ENCODE measurements at regions of chr11 and their contacts with region 1.

Region 1: GRCh38 chr11:88644724-88645123 is 307.2 kb upstream of the CTSC start:
- DNase-seq: no peak
- ATAC-seq: no peak
- H3K4me3 ChIP-seq: no peak overlapping the region
- H3K4me3 Mint-ChIP-seq: no peak overlapping the region
- H3K27ac ChIP-seq: no peak overlapping the region
- H3K27ac Mint-ChIP-seq: no peak overlapping the region
- H3K4me1 ChIP-seq: no peaks in the 10 kb centered on the region
- H3K4me1 Mint-ChIP-seq: no peaks in the 10 kb centered on the region
- H3K27me3 ChIP-seq: no peaks in the 10 kb centered on the region
- H3K27me3 Mint-ChIP-seq: peaks cover 0 to 6% (median 0%) of the 10 kb centered on the region in 5 donors

Region 2: DNA sequence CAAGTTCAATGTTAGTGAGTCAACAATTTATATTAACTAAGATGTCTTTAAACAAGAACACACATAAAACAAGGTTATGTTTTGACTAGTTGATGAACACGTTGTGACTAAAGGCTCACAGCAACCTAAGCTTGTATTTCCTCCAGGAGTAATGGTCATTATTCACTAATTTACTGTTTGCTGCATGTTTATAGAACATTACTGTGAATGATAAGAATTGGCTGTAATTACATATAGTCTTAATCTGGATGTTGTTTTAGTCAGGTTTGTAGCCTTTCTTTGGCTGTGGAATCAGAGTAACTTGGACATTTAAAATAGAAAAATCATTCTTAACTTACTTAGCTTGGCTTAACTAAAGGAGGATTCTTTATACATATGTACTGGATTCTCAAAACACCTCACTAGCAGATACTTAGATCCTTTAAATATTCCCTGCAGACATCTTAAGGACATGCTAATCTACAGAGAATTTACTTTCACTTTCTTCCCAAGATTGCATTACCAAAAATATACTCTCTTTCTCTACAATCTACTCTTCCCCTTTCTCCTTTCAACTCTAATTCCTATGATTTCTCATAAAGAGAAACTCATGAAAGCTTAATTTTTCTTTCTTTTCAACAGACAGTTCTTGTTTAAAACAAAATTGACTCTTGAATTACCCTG is 12.5 kb after region 1 on chr11:
- CTCF ChIA-PET with region 1: no interaction called
- POLR2A ChIA-PET with region 1: no interaction called
- intact Hi-C with region 1: loop called in 1 of 2 experiments (anchors 2 kb)
- DNase-seq: peak in 1 of 9 donors; percentile 4
- ATAC-seq: no peak
- H3K4me3 ChIP-seq: no peak overlapping the region
- H3K4me3 Mint-ChIP-seq: peak overlapping the region in 9 of 10 donors; percentile 8 to 79 (median 71)
- H3K27ac ChIP-seq: no peak overlapping the region
- H3K27ac Mint-ChIP-seq: peak overlapping the region in 6 of 9 donors; percentile 2 to 69 (median 28)
- H3K4me1 ChIP-seq: no peaks in the 10 kb centered on the region
- H3K4me1 Mint-ChIP-seq: peaks cover 0 to 27% (median 12%) of the 10 kb centered on the region in 7 donors
- H3K27me3 ChIP-seq: no peaks in the 10 kb centered on the region
- H3K27me3 Mint-ChIP-seq: no peaks in the 10 kb centered on the region

Region 3: GRCh38 chr11:88709567-88709966 is 64.8 kb after region 1 on chr11:
- CTCF ChIA-PET with region 1: no interaction called
- POLR2A ChIA-PET with region 1: no interaction called
- intact Hi-C with region 1: no loop called
- DNase-seq: no peak
- ATAC-seq: no peak
- H3K4me3 ChIP-seq: no peak overlapping the region
- H3K4me3 Mint-ChIP-seq: no peak overlapping the region
- H3K27ac ChIP-seq: no peak overlapping the region
- H3K27ac Mint-ChIP-seq: no peak overlapping the region
- H3K4me1 ChIP-seq: no peaks in the 10 kb centered on the region
- H3K4me1 Mint-ChIP-seq: peaks cover 0 to 32% (median 14%) of the 10 kb centered on the region in 7 donors
- H3K27me3 ChIP-seq: no peaks in the 10 kb centered on the region
- H3K27me3 Mint-ChIP-seq: no peaks in the 10 kb centered on the region

Measured in naive thymus-derived CD4-positive, alpha-beta T cell (primary cell).